Naive thymus-derived CD4-positive, alpha-beta T cell (primary cell): ENCODE measurements at regions of chr2 and their contacts with region 1.

Region 1: DNA sequence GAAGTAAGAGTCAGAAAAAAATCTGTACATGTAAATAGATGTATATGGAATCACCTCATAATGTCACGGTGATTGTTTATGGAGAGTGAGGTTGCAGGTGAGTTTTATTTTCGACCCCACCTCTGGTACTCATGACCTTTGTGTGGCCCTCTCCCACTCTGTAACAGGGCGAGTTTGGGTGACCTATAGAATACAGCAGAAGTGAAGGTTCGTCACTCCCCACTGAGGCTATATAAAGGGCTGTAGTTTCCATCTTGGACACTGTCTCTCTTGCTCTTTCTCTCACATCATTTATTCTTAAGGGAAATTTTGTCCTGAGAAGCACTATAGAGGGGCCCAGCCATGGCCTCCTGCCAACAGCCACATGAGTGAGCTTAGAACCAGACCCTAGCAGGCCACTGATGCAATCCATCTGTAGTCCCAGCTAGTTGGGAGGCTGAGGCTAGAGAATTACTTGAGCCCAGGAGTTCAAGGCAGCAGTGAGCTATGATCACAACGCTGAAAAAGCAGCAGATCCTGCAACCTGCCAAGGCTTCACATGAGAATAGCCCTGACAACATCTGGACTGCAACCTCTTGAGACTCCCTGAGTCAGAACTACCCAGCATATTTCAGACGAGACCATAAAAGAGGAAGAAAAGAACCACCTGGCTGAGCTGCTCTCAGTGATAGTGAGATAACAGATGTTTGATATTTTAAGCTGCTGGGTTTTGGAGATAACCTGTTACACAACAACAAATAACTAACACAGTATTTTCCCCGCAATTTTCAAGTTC is 74.3 kb upstream of the SLC1A4 start:
- DNase-seq: no peak
- ATAC-seq: peak; percentile 51
- H3K4me3 ChIP-seq: no peak overlapping the region
- H3K4me3 Mint-ChIP-seq: no peak overlapping the region
- H3K27ac ChIP-seq: no peak overlapping the region
- H3K27ac Mint-ChIP-seq: peak overlapping the region in 1 of 9 donors; percentile 34
- H3K4me1 ChIP-seq: peaks cover 6 to 15% of the 10 kb centered on the region in 2 donors
- H3K4me1 Mint-ChIP-seq: peaks cover 6 to 33% (median 20%) of the 10 kb centered on the region in 7 donors
- H3K27me3 ChIP-seq: no peaks in the 10 kb centered on the region
- H3K27me3 Mint-ChIP-seq: no peaks in the 10 kb centered on the region

Region 2: GRCh38 chr2:64859312-64860212 is 55.4 kb before region 1 on chr2:
- CTCF ChIA-PET with region 1: no interaction called
- POLR2A ChIA-PET with region 1: no interaction called
- intact Hi-C with region 1: no loop called
- DNase-seq: no peak
- ATAC-seq: peak; percentile 46
- H3K4me3 ChIP-seq: peak overlapping the region; percentile 7
- H3K4me3 Mint-ChIP-seq: peak overlapping the region in 9 of 10 donors; percentile 21 to 71 (median 59)
- H3K27ac ChIP-seq: no peak overlapping the region
- H3K27ac Mint-ChIP-seq: no peak overlapping the region
- H3K4me1 ChIP-seq: peaks cover 0 to 5% of the 10 kb centered on the region in 2 donors
- H3K4me1 Mint-ChIP-seq: peaks cover 4 to 12% (median 7%) of the 10 kb centered on the region in 7 donors
- H3K27me3 ChIP-seq: peaks cover 0 to 3% of the 10 kb centered on the region in 2 donors
- H3K27me3 Mint-ChIP-seq: peaks cover 2 to 21% (median 8%) of the 10 kb centered on the region in 5 donors

Region 3: DNA sequence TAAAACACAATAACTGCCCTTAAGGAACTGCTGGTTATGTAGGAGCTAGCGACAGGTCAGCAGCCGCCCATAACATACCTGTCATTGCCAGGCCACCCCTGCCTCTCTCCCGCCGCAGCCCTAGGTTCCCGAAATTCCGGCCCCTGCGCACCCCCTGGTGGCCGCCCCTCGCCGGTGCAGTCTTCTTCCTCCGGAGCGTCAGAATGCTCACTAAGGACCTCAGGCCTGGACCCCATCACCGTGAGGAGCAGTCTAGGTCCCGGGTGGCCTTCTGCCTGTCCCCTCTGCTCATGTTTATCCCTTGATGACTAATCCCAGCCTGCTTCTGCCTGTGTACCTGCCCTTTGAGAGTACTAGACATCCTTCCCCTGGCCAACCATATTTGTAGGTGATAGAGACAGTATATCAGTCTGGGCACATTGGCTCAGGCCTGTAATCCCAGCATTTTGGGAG is 41.4 kb before region 1 on chr2:
- CTCF ChIA-PET with region 1: no interaction called
- POLR2A ChIA-PET with region 1: no interaction called
- intact Hi-C with region 1: loop called in 1 of 2 experiments (anchors 1 kb)
- DNase-seq: peak; percentile 51 to 87 (median 71)
- ATAC-seq: peak; percentile 93
- H3K4me3 ChIP-seq: no peak overlapping the region
- H3K4me3 Mint-ChIP-seq: peak overlapping the region in 6 of 10 donors; percentile 25 to 64 (median 46)
- H3K27ac ChIP-seq: no peak overlapping the region
- H3K27ac Mint-ChIP-seq: peak overlapping the region in 2 of 9 donors; percentile 46 to 63
- H3K4me1 ChIP-seq: peaks cover 0 to 3% of the 10 kb centered on the region in 2 donors
- H3K4me1 Mint-ChIP-seq: peaks cover 0 to 7% (median 7%) of the 10 kb centered on the region in 7 donors
- H3K27me3 ChIP-seq: no peaks in the 10 kb centered on the region
- H3K27me3 Mint-ChIP-seq: peaks cover 0 to 24% (median 4%) of the 10 kb centered on the region in 5 donors

Region 4: DNA sequence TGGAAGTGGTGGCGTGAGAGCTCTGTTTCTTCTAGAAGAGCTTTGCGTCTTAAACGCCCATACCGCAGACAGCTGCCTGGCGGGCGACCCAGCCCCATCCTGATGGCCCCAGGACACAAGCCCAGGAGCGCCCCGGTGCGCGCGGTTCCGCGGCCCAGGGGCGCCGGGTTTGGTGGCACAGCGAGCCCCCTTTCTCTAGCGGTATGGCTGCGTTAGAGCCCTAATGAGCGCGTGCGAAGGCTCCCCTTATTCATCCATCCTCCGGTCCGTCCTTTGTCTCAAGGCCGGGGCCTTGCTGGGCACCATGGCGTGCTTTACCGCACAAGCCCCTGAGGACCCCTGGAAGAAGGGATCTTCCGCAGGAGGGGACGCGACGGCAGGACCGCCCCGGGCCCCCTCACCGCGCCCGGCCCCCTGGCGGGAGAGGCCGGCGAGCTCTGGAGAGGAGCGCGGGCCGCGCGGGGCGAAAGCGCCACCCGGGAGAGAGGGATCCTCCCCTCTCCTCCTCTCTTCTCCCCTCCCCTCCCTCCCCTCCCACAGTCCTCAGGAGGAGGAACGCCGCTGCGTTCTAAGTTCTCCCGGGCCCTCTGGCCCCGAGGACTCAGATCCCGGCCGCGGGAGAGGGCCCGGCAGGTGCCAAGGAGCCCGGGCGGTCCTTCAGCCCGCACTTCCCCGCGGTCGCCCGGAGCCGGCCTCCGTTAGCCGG is 73.7 kb after region 1 on chr2:
- CTCF ChIA-PET with region 1: interaction called, 7 read pairs
- POLR2A ChIA-PET with region 1: no interaction called
- intact Hi-C with region 1: loop called (anchors 1 to 2 kb)
- DNase-seq: peak; percentile 17 to 70 (median 39)
- ATAC-seq: peak; percentile 47
- H3K4me3 ChIP-seq: peak overlapping the region; percentile 76
- H3K4me3 Mint-ChIP-seq: peak overlapping the region; percentile 80 to 92 (median 86)
- H3K27ac ChIP-seq: no peak overlapping the region
- H3K27ac Mint-ChIP-seq: peak overlapping the region in 4 of 9 donors; percentile 40 to 73 (median 44)
- H3K4me1 ChIP-seq: peaks cover 0 to 8% of the 10 kb centered on the region in 2 donors
- H3K4me1 Mint-ChIP-seq: peaks cover 16 to 62% (median 24%) of the 10 kb centered on the region in 7 donors
- H3K27me3 ChIP-seq: no peaks in the 10 kb centered on the region
- H3K27me3 Mint-ChIP-seq: peaks cover 0 to 33% (median 4%) of the 10 kb centered on the region in 5 donors

Region 5: GRCh38 chr2:65040400-65041261 is 125.7 kb after region 1 on chr2:
- CTCF ChIA-PET with region 1: interaction called, 30 read pairs
- POLR2A ChIA-PET with region 1: interaction called, 3 read pairs
- intact Hi-C with region 1: loop called (anchors 1 kb)
- DNase-seq: peak; percentile 43 to 77 (median 68)
- ATAC-seq: peak; percentile 100
- H3K4me3 ChIP-seq: no peak overlapping the region
- H3K4me3 Mint-ChIP-seq: peak overlapping the region in 6 of 10 donors; percentile 23 to 65 (median 44)
- H3K27ac ChIP-seq: no peak overlapping the region
- H3K27ac Mint-ChIP-seq: peak overlapping the region in 1 of 9 donors; percentile 34
- H3K4me1 ChIP-seq: peaks cover 0 to 3% of the 10 kb centered on the region in 2 donors
- H3K4me1 Mint-ChIP-seq: peaks cover 0 to 24% (median 12%) of the 10 kb centered on the region in 7 donors
- H3K27me3 ChIP-seq: no peaks in the 10 kb centered on the region
- H3K27me3 Mint-ChIP-seq: peaks cover 0 to 2% (median 0%) of the 10 kb centered on the region in 5 donors

Region 6: GRCh38 chr2:65129826-65130663 is 215.1 kb after region 1 on chr2 and contains the start of gene RAB1A:
- CTCF ChIA-PET with region 1: interaction called, 4 read pairs
- POLR2A ChIA-PET with region 1: no interaction called
- intact Hi-C with region 1: loop called in 1 of 2 experiments (anchors 1 kb)
- DNase-seq: peak; percentile 91 to 99 (median 98)
- ATAC-seq: peak; percentile 94
- H3K4me3 ChIP-seq: peak within 1 kb of the TSS; percentile 78
- H3K4me3 Mint-ChIP-seq: peak within 1 kb of the TSS; percentile 90 to 100 (median 98)
- H3K27ac ChIP-seq: peak within 1 kb of the TSS; percentile 98
- H3K27ac Mint-ChIP-seq: peak within 1 kb of the TSS; percentile 95 to 100 (median 99)
- H3K4me1 ChIP-seq: peaks cover 24 to 25% of the 10 kb centered on the region in 2 donors
- H3K4me1 Mint-ChIP-seq: peaks cover 24 to 47% (median 35%) of the 10 kb centered on the region in 7 donors
- H3K27me3 ChIP-seq: no peaks in the 10 kb centered on the region
- H3K27me3 Mint-ChIP-seq: peaks cover 0 to 17% (median 0%) of the 10 kb centered on the region in 5 donors
- total RNA-seq, gene RAB1A: 48.8 to 78.6 (median 65.8) TPM

Region 7: DNA sequence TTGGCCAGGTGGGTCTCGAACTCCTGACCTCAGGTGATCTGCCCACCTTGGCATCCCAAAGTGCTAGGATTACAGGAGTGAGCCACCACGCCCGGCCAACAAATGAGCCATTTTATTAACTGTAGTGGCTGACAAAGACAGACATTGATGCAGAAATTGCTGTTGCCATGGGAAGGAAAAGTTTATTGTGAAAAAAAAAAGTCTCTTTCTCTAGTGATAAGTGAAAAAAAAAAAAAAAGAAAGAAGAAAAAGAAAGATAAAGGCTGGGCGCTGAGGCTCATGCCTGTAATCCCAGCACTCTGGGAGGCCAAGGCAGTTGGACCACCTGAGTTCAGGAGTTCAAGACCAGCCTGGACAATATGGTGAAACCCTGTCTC is 254.8 kb after region 1 on chr2:
- CTCF ChIA-PET with region 1: interaction called, 15 read pairs
- POLR2A ChIA-PET with region 1: no interaction called
- intact Hi-C with region 1: loop called in 1 of 2 experiments (anchors 1 kb)
- DNase-seq: no peak
- ATAC-seq: no peak
- H3K4me3 ChIP-seq: no peak overlapping the region
- H3K4me3 Mint-ChIP-seq: no peak overlapping the region
- H3K27ac ChIP-seq: no peak overlapping the region
- H3K27ac Mint-ChIP-seq: no peak overlapping the region
- H3K4me1 ChIP-seq: no peaks in the 10 kb centered on the region
- H3K4me1 Mint-ChIP-seq: peaks cover 0 to 2% (median under 1%) of the 10 kb centered on the region in 7 donors
- H3K27me3 ChIP-seq: no peaks in the 10 kb centered on the region
- H3K27me3 Mint-ChIP-seq: no peaks in the 10 kb centered on the region

Region 8: GRCh38 chr2:65576861-65577601 is 662.1 kb after region 1 on chr2:
- CTCF ChIA-PET with region 1: interaction called, 3 read pairs
- POLR2A ChIA-PET with region 1: no interaction called
- intact Hi-C with region 1: loop called in 1 of 2 experiments (anchors 1 kb)
- DNase-seq: no peak
- ATAC-seq: no peak
- H3K4me3 ChIP-seq: no peak overlapping the region
- H3K4me3 Mint-ChIP-seq: no peak overlapping the region
- H3K27ac ChIP-seq: no peak overlapping the region
- H3K27ac Mint-ChIP-seq: peak overlapping the region in 1 of 9 donors; percentile 9
- H3K4me1 ChIP-seq: no peaks in the 10 kb centered on the region
- H3K4me1 Mint-ChIP-seq: peaks cover 0 to 5% (median 4%) of the 10 kb centered on the region in 7 donors
- H3K27me3 ChIP-seq: no peaks in the 10 kb centered on the region
- H3K27me3 Mint-ChIP-seq: peaks cover 5 to 16% (median 11%) of the 10 kb centered on the region in 5 donors